ENCODE measurements at regions of chr9 and their contacts with region 1.

Region 1: GRCh38 chr9:112333639-112334431 is 416 bp upstream of the PTBP3 start:
- DNase-seq: peak; percentile 82 to 97 (median 90)
- ATAC-seq: peak; percentile 79 to 83
- H3K4me3 Mint-ChIP-seq: peak overlapping the region; percentile 77 to 98 (median 92)
- H3K27ac Mint-ChIP-seq: peak overlapping the region; percentile 83 to 98 (median 90)
- H3K4me1 Mint-ChIP-seq: peaks cover 14 to 43% (median 36%) of the 10 kb centered on the region in 4 donors
- H3K27me3 Mint-ChIP-seq: no peaks in the 10 kb centered on the region

Region 2: GRCh38 chr9:112379177-112380101 is 45.6 kb after region 1 on chr9:
- POLR2A ChIA-PET with region 1: interaction called, 23 read pairs
- DNase-seq: peak; percentile 92 to 98 (median 95)
- ATAC-seq: peak; percentile 92 to 94
- H3K4me3 Mint-ChIP-seq: peak overlapping the region; percentile 93 to 100 (median 99)
- H3K27ac Mint-ChIP-seq: peak overlapping the region; percentile 95 to 98 (median 98)
- H3K4me1 Mint-ChIP-seq: peaks cover 26 to 67% (median 55%) of the 10 kb centered on the region in 4 donors
- H3K27me3 Mint-ChIP-seq: no peaks in the 10 kb centered on the region

Region 3: GRCh38 chr9:112411626-112412027 is 77.8 kb after region 1 on chr9:
- POLR2A ChIA-PET with region 1: no interaction called
- DNase-seq: no peak
- ATAC-seq: no peak
- H3K4me3 Mint-ChIP-seq: no peak overlapping the region
- H3K27ac Mint-ChIP-seq: no peak overlapping the region
- H3K4me1 Mint-ChIP-seq: no peaks in the 10 kb centered on the region
- H3K27me3 Mint-ChIP-seq: no peaks in the 10 kb centered on the region

Measured in naive thymus-derived CD8-positive, alpha-beta T cell (primary cell).